ENCODE measurements at regions of chr2 and their contacts with region 1.

Region 1: GRCh38 chr2:231482806-231483391 is 18.6 kb upstream of the NCL start:
- DNase-seq: peak; percentile 22
- ATAC-seq: peak; percentile 99
- H3K4me3 ChIP-seq: no peak overlapping the region
- H3K27ac ChIP-seq: no peak overlapping the region
- H3K4me1 ChIP-seq: no peaks in the 10 kb centered on the region
- H3K27me3 ChIP-seq: peaks cover 8% of the 10 kb centered on the region; the same call in 1 of the 2 replicates
- CTCF ChIP-seq: peak; percentile 79
- POLR2A ChIP-seq: no peak
- RAD21 ChIP-seq: peak; percentile 59

Region 2: GRCh38 chr2:230668184-230668938 is 814.5 kb before region 1 on chr2:
- CTCF ChIA-PET with region 1: no interaction called
- POLR2A ChIA-PET with region 1: no interaction called
- dilution Hi-C with region 1: no loop called
- in situ Hi-C with region 1: no loop called
- intact Hi-C with region 1: loop called (anchors 10 kb)
- DNase-seq: peak; percentile 74
- ATAC-seq: peak; percentile 20; the same call in 1 of the 2 replicates
- H3K4me3 ChIP-seq: no peak overlapping the region
- H3K27ac ChIP-seq: no peak overlapping the region
- H3K4me1 ChIP-seq: peaks cover 29% of the 10 kb centered on the region
- H3K27me3 ChIP-seq: no peaks in the 10 kb centered on the region
- CTCF ChIP-seq: no peak
- POLR2A ChIP-seq: no peak
- RAD21 ChIP-seq: no peak

Region 3: GRCh38 chr2:231530091-231531011 is 47.5 kb after region 1 on chr2 and contains the start of gene NMUR1:
- CTCF ChIA-PET with region 1: no interaction called
- POLR2A ChIA-PET with region 1: no interaction called
- dilution Hi-C with region 1: no loop called
- in situ Hi-C with region 1: no loop called
- intact Hi-C with region 1: no loop called
- DNase-seq: no peak
- ATAC-seq: peak; percentile 83
- H3K4me3 ChIP-seq: no peak within 1 kb of the TSS; the same call in 1 of the 2 replicates
- H3K27ac ChIP-seq: no peak within 1 kb of the TSS
- H3K4me1 ChIP-seq: no peaks in the 10 kb centered on the region
- H3K27me3 ChIP-seq: peaks cover 41% of the 10 kb centered on the region
- CTCF ChIP-seq: peak; percentile 66
- POLR2A ChIP-seq: no peak
- RAD21 ChIP-seq: peak; percentile 38
- total RNA-seq, gene NMUR1: not detected in 2 replicates

Region 4: GRCh38 chr2:231557571-231558237 is 74.8 kb after region 1 on chr2:
- CTCF ChIA-PET with region 1: interaction called, 4 read pairs
- POLR2A ChIA-PET with region 1: no interaction called
- dilution Hi-C with region 1: no loop called
- in situ Hi-C with region 1: no loop called
- intact Hi-C with region 1: loop called (anchors 1 kb)
- DNase-seq: peak; percentile 81
- ATAC-seq: peak; percentile 95
- H3K4me3 ChIP-seq: no peak overlapping the region
- H3K27ac ChIP-seq: no peak overlapping the region
- H3K4me1 ChIP-seq: peaks cover 8% of the 10 kb centered on the region; the same call in 1 of the 2 replicates
- H3K27me3 ChIP-seq: no peaks in the 10 kb centered on the region
- CTCF ChIP-seq: peak; percentile 82
- POLR2A ChIP-seq: no peak
- RAD21 ChIP-seq: peak; percentile 84

Region 5: GRCh38 chr2:231604685-231605606 is 122.0 kb after region 1 on chr2:
- CTCF ChIA-PET with region 1: no interaction called
- POLR2A ChIA-PET with region 1: no interaction called
- dilution Hi-C with region 1: no loop called
- in situ Hi-C with region 1: no loop called
- intact Hi-C with region 1: loop called (anchors 2 kb)
- DNase-seq: peak; percentile 95
- ATAC-seq: peak; percentile 93
- H3K4me3 ChIP-seq: peak overlapping the region; percentile 42
- H3K27ac ChIP-seq: peak overlapping the region; percentile 67
- H3K4me1 ChIP-seq: peaks cover 11% of the 10 kb centered on the region
- H3K27me3 ChIP-seq: no peaks in the 10 kb centered on the region
- CTCF ChIP-seq: no peak
- POLR2A ChIP-seq: peak; percentile 91
- RAD21 ChIP-seq: peak; percentile 12; the same call in 1 of the 2 replicates

Region 6: DNA sequence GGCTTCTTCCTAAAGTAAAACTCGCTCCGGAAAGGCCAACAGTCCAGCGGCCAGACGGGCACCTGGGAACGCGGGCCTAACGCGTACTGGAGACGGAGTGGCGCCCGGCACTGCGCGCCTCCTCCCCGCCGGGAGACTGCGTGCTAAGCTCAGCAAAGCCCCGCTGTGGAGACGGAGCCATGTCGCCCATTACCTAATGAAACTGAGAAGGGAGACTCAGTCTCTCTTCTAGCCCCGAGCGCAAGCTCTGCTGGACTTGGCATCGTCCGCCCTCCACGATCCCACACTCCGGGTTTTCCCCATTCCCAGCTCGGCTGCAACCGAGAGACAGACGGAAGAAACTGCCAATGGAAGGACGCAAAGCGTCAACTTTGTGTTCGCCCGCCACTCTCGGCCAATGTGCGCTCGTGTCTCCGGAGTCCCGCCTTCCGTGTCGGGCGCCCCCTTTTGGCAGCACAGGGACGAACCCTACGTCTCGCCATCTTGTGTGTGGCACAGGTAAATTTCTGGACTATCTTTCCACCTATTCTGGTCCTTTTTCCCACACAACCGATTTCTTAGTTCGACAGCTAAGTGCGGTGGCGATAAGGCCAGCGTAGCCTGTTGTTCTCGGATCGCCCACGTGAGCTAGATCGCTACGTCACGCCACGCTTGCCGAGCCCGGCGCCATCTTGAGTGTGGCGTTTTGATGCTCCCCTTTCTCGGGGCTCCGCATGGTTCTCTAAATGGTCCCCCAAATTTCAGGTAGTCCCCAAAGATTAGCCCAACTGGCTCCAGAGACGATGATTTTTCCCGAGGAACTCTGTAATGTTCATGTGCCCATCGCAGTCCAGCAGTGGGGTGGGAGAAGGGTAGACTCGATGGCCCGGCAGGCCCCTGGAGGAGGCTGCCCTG is 224.1 kb after region 1 on chr2:
- CTCF ChIA-PET with region 1: no interaction called
- POLR2A ChIA-PET with region 1: no interaction called
- dilution Hi-C with region 1: no loop called
- in situ Hi-C with region 1: no loop called
- intact Hi-C with region 1: no loop called
- DNase-seq: peak; percentile 99
- ATAC-seq: peak; percentile 56
- H3K4me3 ChIP-seq: peak overlapping the region; percentile 63
- H3K27ac ChIP-seq: peak overlapping the region; percentile 94
- H3K4me1 ChIP-seq: peaks cover 7% of the 10 kb centered on the region
- H3K27me3 ChIP-seq: no peaks in the 10 kb centered on the region
- CTCF ChIP-seq: peak; percentile 99
- POLR2A ChIP-seq: no peak; the same call in 1 of the 2 replicates
- RAD21 ChIP-seq: no peak; the same call in 1 of the 2 replicates